Naive thymus-derived CD8-positive, alpha-beta T cell (primary cell): ENCODE measurements at regions of chr11 and their contacts with region 1.

Region 1: DNA sequence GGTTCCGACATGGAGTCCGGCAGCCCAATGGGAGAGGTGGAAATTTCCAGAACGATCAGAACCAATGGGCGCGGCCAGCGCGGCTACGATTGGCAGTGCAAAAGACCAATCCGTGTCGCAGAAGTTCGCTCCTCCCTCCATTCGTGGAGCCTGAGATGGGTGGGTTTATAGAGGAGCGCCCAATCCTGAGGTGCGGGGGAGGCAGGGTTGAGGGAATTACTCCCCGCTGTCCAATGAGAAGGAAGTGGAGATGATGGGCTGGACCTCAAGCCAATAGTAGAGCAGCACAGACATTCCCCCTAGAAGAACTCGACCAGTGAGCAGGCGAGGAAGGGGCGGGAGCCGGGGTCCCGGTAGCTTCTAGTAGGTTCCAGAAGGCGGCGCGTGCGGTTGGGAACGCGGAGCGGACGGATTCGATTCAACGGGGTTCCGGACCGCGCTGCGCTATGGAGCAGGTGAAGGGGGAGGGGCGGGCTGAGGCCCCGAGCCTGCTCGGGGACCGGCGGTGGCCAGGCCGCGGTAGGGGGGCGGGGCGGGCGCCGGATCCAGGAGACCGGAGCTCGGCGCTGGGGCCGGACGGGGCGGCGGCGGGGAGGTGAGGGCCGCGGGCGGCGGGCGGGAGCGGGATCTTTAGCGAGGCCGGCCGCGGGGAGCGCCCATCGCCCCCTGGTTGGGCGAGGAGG is at the start of gene STIP1:
- DNase-seq: peak; percentile 93 to 100 (median 99)
- ATAC-seq: peak; percentile 90 to 91
- H3K4me3 Mint-ChIP-seq: peak within 1 kb of the TSS in 8 of 10 donors; percentile 96 to 100 (median 98)
- H3K27ac Mint-ChIP-seq: peak within 1 kb of the TSS; percentile 91 to 99 (median 96)
- H3K4me1 Mint-ChIP-seq: peaks cover 23 to 55% (median 47%) of the 10 kb centered on the region in 4 donors
- H3K27me3 Mint-ChIP-seq: peaks cover 0 to 2% (median 0%) of the 10 kb centered on the region in 5 donors
- polyA plus RNA-seq, gene STIP1: 59.4 to 132 (median 66.2) TPM

Region 2: DNA sequence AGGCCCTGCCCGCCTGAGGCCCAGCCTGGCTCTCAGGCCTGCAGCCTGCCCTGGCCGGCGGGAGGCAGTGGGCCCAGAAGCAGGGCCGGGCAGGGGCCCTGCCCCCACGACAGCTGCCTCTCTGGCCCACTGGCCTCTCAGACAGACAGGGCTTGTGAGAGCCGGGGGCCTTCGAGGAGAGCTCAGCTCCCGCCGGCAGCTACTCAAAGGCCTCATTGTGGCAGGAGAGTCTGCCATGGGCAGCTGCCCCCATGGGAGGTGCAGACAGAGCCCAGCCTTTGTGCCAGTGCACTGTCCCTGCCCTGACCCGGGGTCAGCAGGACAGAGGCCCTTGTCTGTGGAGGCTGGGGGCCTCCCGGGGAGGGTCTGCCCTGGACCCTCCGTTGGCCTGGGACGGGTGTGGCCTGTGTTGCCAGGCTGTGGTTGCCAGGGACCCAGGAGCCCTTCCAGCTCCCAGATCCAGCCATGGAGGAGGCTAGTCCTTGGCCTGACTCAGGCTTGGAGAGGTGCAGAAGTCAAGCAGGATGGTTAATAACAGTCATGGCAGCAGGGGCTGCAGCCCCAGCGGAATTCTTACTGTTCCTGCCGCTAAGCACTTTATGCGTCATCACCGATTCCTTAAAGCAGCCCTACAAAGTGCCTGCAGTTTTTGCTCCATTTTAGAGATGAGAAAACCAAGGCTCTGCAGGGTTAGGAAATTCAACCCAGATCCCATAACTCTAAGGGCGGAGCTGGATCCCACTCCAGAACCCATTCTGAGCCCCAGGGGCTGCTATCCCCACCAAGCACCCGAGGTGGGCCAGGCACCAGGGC is 137.7 kb before region 1 on chr11:
- POLR2A ChIA-PET with region 1: no interaction called
- DNase-seq: no peak
- ATAC-seq: no peak
- H3K4me3 Mint-ChIP-seq: no peak overlapping the region
- H3K27ac Mint-ChIP-seq: no peak overlapping the region
- H3K4me1 Mint-ChIP-seq: no peaks in the 10 kb centered on the region
- H3K27me3 Mint-ChIP-seq: no peaks in the 10 kb centered on the region

Region 3: DNA sequence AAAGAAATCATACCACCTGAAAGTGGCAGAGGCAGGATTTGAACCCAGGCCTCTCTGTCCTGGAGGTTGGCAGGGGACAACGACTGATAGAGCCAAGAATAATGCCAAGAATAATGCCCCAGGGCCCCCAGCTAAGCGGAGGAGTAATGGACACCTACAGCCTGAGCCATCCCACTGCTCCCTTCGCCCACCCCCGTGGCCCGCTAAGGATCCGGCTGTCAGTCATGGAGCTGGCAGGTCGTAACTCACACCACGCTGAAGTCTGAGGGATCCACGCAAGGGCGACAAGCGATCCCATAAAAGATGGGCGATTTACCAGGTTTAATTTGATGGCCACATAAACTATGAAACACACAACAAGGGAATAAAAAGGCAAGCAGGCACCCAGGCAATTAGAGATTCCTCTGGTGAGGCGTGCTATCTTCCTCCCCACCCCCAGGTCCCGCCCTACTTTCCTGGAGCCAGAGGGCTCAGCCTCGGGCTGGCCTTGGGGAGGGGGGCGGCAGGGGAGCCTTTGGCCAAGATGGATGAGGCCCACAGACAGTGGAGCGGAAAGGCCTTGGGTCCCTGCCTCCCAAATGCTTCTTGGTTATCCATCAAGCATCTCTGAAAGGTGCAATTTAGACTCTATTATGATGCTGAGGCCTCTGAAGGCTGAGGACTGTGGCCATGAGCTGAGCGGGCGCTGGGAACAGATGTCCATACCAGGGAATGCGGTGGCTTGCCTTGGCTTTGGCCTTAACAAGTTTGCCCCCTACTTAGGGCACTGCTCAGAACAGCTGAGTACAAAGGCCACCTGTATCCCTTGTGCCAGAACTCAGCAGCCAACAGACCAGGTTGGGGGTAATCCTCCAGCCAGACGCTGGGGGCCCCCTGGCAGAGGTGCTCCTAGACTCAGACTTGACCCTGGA is 75.2 kb before region 1 on chr11:
- POLR2A ChIA-PET with region 1: no interaction called
- DNase-seq: no peak
- ATAC-seq: no peak
- H3K4me3 Mint-ChIP-seq: no peak overlapping the region
- H3K27ac Mint-ChIP-seq: no peak overlapping the region
- H3K4me1 Mint-ChIP-seq: no peaks in the 10 kb centered on the region
- H3K27me3 Mint-ChIP-seq: no peaks in the 10 kb centered on the region

Region 4: DNA sequence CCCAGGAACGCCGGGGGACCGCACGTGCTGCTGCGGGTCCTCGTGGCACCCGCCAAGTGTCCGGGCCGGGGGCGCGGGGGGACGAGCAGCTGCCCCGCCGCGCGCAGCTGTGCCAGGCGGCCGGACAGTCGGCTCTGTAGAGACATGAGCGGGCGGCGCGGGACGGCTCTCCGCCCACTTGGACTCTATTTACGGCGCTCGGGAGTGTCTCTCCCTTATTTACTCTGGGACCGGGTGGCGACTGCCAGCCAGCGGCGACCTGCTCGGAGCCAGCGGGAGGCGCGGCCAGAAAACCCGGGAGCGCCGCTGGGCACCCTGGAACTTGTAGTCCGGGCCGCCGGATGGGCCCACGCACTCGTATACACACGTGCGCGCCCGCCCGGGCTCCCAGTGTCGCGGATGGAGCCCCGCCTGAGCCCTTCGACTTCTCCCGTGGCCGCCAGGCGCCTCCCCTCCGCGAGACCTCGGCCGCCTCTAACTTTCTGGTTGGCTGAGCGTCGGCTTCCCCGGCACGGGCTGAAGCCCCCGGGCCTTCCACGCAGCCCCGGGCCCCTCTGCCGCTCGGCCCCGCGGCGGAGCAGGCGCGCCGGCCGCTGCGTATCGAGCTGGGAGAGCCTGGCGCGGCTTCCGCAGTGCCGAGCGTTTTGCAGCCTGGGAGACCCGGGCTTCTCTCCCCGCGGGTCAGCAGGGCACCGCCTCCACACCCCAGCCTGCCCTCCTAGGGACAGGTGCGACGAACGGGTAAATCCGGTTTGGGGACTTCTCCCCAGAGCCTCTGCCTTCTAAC is 19.9 kb before region 1 on chr11 and contains the start of gene MACROD1:
- POLR2A ChIA-PET with region 1: interaction called, 28 read pairs
- DNase-seq: peak; percentile 59 to 85 (median 66)
- ATAC-seq: peak; percentile 94 to 95
- H3K4me3 Mint-ChIP-seq: peak within 1 kb of the TSS; percentile 83 to 96 (median 91)
- H3K27ac Mint-ChIP-seq: peak within 1 kb of the TSS; percentile 56 to 91 (median 82)
- H3K4me1 Mint-ChIP-seq: peaks cover 6 to 23% (median 16%) of the 10 kb centered on the region in 4 donors
- H3K27me3 Mint-ChIP-seq: no peaks in the 10 kb centered on the region
- polyA plus RNA-seq, gene MACROD1: 7.3 to 14.4 (median 10.7) TPM

Region 5: GRCh38 chr11:64225612-64226506 is 39.9 kb after region 1 on chr11 and contains the starts of genes NUDT22 and TRPT1:
- POLR2A ChIA-PET with region 1: interaction called, 22 read pairs
- DNase-seq: peak; percentile 80 to 93 (median 85)
- ATAC-seq: peak; percentile 69 to 71
- H3K4me3 Mint-ChIP-seq: peak within 1 kb of the TSS; percentile 87 to 95 (median 90)
- H3K27ac Mint-ChIP-seq: peak within 1 kb of the TSS; percentile 83 to 97 (median 92)
- H3K4me1 Mint-ChIP-seq: peaks cover 17 to 41% (median 33%) of the 10 kb centered on the region in 4 donors
- H3K27me3 Mint-ChIP-seq: no peaks in the 10 kb centered on the region
- polyA plus RNA-seq, gene NUDT22: 43.4 to 50.4 (median 48.2) TPM
- polyA plus RNA-seq, gene TRPT1: 47.2 to 54.2 (median 51.4) TPM

Region 6: GRCh38 chr11:64240394-64241174 is 54.6 kb after region 1 on chr11 and contains the start of gene FKBP2:
- POLR2A ChIA-PET with region 1: interaction called, 22 read pairs
- DNase-seq: peak; percentile 96 to 99 (median 98)
- ATAC-seq: peak; percentile 73 to 75
- H3K4me3 Mint-ChIP-seq: peak within 1 kb of the TSS; percentile 86 to 96 (median 93)
- H3K27ac Mint-ChIP-seq: peak within 1 kb of the TSS; percentile 96 to 100 (median 99)
- H3K4me1 Mint-ChIP-seq: peaks cover 12 to 47% (median 40%) of the 10 kb centered on the region in 4 donors
- H3K27me3 Mint-ChIP-seq: no peaks in the 10 kb centered on the region
- polyA plus RNA-seq, gene FKBP2: 84.9 to 91.8 (median 85.5) TPM

Region 7: GRCh38 chr11:64246871-64247728 is 61.1 kb after region 1 on chr11 and contains the start of gene PPP1R14B:
- POLR2A ChIA-PET with region 1: interaction called, 22 read pairs
- DNase-seq: peak; percentile 57 to 87 (median 71)
- ATAC-seq: peak; percentile 65 to 69
- H3K4me3 Mint-ChIP-seq: peak within 1 kb of the TSS; percentile 79 to 92 (median 88)
- H3K27ac Mint-ChIP-seq: peak within 1 kb of the TSS; percentile 13 to 93 (median 82)
- H3K4me1 Mint-ChIP-seq: peaks cover 18 to 53% (median 48%) of the 10 kb centered on the region in 4 donors
- H3K27me3 Mint-ChIP-seq: no peaks in the 10 kb centered on the region
- polyA plus RNA-seq, gene PPP1R14B: 22.4 to 50.6 (median 45.4) TPM

Region 8: GRCh38 chr11:64304316-64305072 is 118.5 kb after region 1 on chr11:
- POLR2A ChIA-PET with region 1: interaction called, 17 read pairs
- DNase-seq: peak; percentile 83 to 95 (median 90)
- ATAC-seq: peak; percentile 33 to 39
- H3K4me3 Mint-ChIP-seq: peak overlapping the region; percentile 85 to 97 (median 93)
- H3K27ac Mint-ChIP-seq: peak overlapping the region; percentile 87 to 98 (median 95)
- H3K4me1 Mint-ChIP-seq: peaks cover 22 to 47% (median 43%) of the 10 kb centered on the region in 4 donors
- H3K27me3 Mint-ChIP-seq: peaks cover 12 to 18% (median 14%) of the 10 kb centered on the region in 5 donors